MCF 10A (cell line): ENCODE measurements at regions of chr11 and their contacts with region 1.

Region 1: DNA sequence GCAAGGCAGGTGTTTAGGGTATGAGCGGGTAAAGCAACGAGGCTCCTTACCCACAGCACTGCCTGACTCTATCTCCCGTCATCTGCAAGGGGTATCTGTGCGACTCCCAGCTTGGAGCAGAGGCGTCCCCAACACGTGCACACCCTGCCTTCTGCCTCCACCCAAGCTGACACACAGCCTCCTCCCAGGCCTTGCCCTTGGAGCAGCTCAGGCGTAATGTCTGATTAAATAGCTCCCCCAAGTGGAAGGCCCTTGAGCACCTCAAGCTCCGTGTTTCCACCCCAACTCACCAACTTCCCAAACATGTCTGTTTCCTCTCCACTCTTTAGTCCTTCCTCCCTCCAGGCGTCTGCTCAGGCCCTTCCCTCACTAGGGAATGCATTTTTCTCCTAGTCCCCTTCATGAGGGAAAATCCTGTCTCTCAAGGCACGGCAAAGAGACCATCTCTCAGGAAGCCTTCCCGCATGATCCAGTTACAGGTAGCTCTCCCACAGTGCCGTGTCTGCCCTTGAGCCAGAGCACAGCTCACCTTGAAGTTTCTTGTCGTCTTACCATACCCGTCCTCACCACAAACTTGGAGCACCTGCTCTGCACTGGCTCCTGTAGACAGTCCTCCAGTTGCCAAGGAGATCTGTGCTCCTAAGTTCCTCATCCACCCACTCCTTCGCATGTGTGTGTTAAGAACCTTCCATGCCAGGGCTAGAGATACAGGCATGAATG is 15.8 kb downstream of the CYB5R2 start:
- DNase-seq: peak; percentile 80
- H3K4me3 Mint-ChIP-seq: no peak overlapping the region
- H3K27ac Mint-ChIP-seq: no peak overlapping the region
- H3K4me1 Mint-ChIP-seq: no peaks in the 10 kb centered on the region
- H3K27me3 Mint-ChIP-seq: no peaks in the 10 kb centered on the region
- CTCF ChIP-seq: peak; percentile 65

Region 2: DNA sequence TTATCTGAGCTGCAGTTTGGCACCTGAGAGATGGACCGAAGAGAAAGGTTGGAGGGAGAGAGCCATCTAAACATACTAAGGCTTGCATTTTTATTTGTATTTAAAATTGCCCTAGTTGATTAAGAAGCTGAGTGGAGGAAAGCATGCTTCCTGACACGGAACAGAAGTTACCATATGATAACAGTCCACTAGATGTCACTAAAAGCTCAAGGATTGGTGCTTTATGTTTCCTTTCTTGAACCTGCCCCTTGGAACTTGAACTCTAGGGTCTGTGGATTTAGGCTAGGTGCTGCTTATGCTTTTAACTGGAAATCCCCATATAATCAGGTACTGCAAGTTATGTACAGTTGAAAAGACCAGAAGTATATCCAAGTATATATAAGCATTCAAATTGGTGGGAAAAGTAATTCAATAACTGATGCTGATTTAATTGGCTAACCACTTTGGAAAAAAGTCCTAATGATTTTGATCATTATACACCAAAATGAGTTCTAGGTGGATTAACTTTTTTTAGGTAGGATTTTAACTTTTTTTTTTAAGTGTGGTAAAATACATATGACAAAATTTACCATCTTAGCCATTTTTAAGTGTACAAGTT is 559.1 kb before region 1 on chr11:
- CTCF ChIA-PET with region 1: interaction called, 12 read pairs
- POLR2A ChIA-PET with region 1: no interaction called
- intact Hi-C with region 1: no loop called
- DNase-seq: peak; percentile 63
- H3K4me3 Mint-ChIP-seq: no peak overlapping the region
- H3K27ac Mint-ChIP-seq: no peak overlapping the region
- H3K4me1 Mint-ChIP-seq: no peaks in the 10 kb centered on the region
- H3K27me3 Mint-ChIP-seq: peaks cover 84% of the 10 kb centered on the region
- CTCF ChIP-seq: peak; percentile 73

Region 3: DNA sequence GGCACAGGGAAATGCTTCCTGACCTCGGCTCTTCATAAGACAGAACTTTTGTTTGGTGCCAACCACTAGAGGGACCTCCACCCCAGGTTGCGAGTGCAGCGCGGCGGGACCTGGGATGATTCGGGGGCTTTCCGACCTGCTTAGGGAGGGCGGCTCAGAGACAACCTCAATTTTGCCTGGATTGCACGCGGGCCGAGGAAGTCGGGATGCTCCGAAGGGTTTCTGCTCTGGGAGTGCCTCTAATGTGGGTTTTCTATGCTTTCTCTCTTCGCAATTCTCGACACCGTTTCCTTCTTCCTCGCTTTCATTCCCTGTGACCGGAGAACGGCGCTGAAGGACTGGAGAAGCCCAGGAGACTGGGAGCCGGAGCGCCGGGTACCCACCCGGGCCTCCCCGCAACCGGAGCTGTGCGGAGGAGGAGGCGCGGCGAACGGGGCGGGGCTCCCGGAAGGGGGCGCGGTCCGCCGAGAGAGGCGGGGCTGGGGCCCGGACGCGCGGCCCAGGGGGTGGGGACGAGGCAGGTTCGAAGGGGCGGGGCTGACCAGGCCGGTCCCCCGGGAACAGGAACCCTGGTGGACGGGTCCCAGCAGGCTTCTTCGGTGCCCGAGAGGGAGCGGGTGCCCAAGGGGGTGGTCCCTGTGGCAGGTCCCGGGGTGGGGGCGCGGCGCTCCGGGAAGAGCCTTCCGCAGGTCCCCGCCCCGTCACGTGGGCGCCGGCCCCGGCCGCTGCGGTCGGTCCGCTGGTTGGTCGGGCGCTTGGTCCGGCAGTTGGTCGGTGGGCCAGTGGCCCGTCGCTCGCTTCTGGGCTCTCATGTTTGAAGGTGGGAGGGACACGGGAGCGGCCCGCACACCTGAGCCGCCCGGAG is 144.0 kb before region 1 on chr11 and contains the start of gene PPFIBP2:
- CTCF ChIA-PET with region 1: interaction called, 36 read pairs
- POLR2A ChIA-PET with region 1: no interaction called
- intact Hi-C with region 1: loop called (anchors 1 kb)
- DNase-seq: peak; percentile 70
- H3K4me3 Mint-ChIP-seq: peak within 1 kb of the TSS; percentile 83
- H3K27ac Mint-ChIP-seq: peak within 1 kb of the TSS; percentile 52
- H3K4me1 Mint-ChIP-seq: no peaks in the 10 kb centered on the region
- H3K27me3 Mint-ChIP-seq: peaks cover 17% of the 10 kb centered on the region
- CTCF ChIP-seq: peak; percentile 74
- total RNA-seq, gene PPFIBP2: 3.5 and 4.3 TPM in 2 replicates

Region 4: GRCh38 chr11:7587444-7588111 is 69.9 kb before region 1 on chr11:
- CTCF ChIA-PET with region 1: interaction called, 16 read pairs
- POLR2A ChIA-PET with region 1: no interaction called
- intact Hi-C with region 1: no loop called
- DNase-seq: no peak
- H3K4me3 Mint-ChIP-seq: no peak overlapping the region
- H3K27ac Mint-ChIP-seq: no peak overlapping the region
- H3K4me1 Mint-ChIP-seq: peaks cover 14% of the 10 kb centered on the region
- H3K27me3 Mint-ChIP-seq: no peaks in the 10 kb centered on the region
- CTCF ChIP-seq: no peak

Region 5: GRCh38 chr11:7622721-7623120 is 34.7 kb before region 1 on chr11:
- CTCF ChIA-PET with region 1: interaction called, 10 read pairs
- POLR2A ChIA-PET with region 1: no interaction called
- intact Hi-C with region 1: no loop called
- DNase-seq: no peak
- H3K4me3 Mint-ChIP-seq: no peak overlapping the region
- H3K27ac Mint-ChIP-seq: no peak overlapping the region
- H3K4me1 Mint-ChIP-seq: no peaks in the 10 kb centered on the region
- H3K27me3 Mint-ChIP-seq: no peaks in the 10 kb centered on the region
- CTCF ChIP-seq: no peak

Region 6: DNA sequence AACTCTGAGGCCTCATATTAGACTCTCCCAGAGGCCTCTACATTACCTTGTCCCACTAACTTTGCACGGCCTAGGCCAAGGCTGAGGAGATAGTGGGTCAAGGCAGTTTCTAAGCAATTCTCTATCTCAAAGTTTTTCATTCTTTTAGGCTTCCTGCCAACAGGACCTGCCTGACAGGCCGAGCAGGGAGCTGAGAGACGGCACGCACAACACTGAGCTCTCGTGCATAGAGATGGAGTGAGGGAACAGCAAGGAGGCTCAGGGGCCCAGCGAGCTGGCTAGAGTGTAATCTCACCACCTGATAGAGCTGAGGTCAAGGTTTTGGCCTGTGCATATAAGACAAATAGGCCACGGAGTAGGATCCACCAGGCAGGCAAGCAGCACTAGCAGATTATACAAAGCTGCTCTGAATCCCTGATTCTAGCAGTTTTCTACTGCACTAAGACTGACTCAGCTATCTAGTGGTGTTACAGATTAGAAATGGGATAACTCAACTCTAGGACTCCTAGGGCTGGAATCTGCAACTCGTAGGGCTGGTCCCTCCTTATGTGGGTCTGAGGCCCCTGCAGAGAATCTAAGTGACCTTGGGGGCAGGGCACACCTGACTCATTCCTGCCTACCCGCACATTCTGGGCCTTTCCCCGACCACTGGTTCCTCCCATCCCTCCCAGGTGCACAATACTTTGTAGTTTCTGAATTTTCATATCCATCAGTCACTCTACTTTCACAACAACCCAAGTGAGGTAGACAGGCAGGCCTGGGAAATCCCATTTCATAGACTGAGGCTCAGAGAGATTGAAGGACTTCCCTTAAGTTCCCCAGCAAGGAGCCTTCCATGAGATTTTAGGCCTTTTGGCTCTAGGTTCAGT is 14.1 kb after region 1 on chr11:
- CTCF ChIA-PET with region 1: interaction called, 32 read pairs
- POLR2A ChIA-PET with region 1: no interaction called
- intact Hi-C with region 1: no loop called
- DNase-seq: no peak
- H3K4me3 Mint-ChIP-seq: no peak overlapping the region
- H3K27ac Mint-ChIP-seq: no peak overlapping the region
- H3K4me1 Mint-ChIP-seq: peaks cover 6% of the 10 kb centered on the region
- H3K27me3 Mint-ChIP-seq: no peaks in the 10 kb centered on the region
- CTCF ChIP-seq: no peak